K562 (cell line): ENCODE measurements at regions of chr19 and their contacts with region 1.

Region 1: DNA sequence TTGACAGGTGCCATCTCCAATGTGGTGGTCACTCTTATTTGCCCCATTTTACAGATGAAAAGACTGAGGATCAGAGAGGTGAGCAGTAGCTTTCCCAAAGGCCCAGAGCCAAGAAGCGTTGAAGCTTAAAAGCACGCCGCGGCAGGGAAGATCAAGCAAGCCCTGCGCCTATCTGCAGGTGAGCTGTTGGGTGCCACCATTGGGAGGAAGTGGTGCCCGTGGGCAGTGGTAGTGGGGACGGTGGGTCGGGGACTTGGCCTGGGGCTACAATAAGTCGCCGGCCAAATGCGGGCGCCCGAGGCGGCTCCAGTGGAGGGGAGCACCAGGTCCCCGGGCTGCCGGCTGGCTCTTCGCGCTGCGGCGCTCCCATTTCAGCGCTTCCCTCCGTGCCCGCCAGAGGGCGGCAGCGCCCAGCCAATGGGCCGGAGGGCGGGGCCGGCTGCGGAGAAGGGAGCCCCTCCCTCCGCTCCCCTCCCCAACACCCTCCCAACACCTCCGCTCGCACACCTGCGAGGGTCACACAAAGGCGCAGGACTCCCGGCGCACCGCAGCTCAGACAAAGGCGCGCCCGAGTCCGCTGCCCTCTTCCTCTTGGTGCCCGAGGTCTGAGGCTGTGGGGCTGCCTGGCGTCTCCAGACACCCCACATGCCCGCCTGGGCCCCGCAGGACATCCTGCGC is 744 bp upstream of the POU2F2 start:
- DNase-seq: peak; percentile 77 to 97 (median 93)
- ATAC-seq: peak; percentile 95
- H3K4me3 ChIP-seq: no peak overlapping the region
- H3K27ac ChIP-seq: no peak overlapping the region
- H3K4me1 ChIP-seq: peaks cover 0 to 25% of the 10 kb centered on the region in 2 experiments; a peak in 2 of 5 replicates
- H3K27me3 ChIP-seq: peaks cover 35 to 77% of the 10 kb centered on the region in 2 experiments; a peak in 4 of 5 replicates
- CTCF ChIP-seq: peak; percentile 86 to 96 (median 96)
- EP300 ChIP-seq: no peak
- POLR2A ChIP-seq: no peak
- RAD21 ChIP-seq: peak; percentile 92 to 97

Region 2: DNA sequence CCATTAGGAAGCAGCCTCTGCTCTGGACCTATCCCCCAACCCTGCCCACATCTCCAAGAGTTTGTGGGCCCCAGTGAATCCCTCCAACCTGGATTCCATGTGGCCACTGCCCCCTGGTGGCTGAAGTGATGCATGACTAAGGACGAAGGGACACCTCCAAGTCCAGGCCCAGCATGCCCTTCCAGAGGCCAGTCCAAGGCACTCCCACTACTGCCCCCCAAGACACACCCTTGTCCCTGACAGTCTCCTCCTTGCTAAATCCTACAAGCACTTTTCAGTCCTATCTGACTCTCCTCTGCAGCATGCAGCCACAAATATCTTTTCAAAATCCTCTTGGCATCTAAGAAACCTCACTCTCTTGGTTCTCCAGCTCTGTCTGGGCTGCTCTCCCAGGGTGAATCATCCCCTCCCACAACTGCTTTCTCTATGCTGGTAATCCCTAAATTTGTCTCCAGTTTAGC is 51.4 kb after region 1 on chr19:
- CTCF ChIA-PET with region 1: interaction called, 4 read pairs
- POLR2A ChIA-PET with region 1: interaction called, 3 read pairs
- in situ Hi-C with region 1: no loop called
- intact Hi-C with region 1: loop called (anchors 2 kb)
- DNase-seq: peak; percentile 81 to 86 (median 86)
- ATAC-seq: peak; percentile 98
- H3K4me3 ChIP-seq: no peak overlapping the region
- H3K27ac ChIP-seq: no peak overlapping the region
- H3K4me1 ChIP-seq: peaks cover 0 to 6% of the 10 kb centered on the region in 2 experiments; a peak in 2 of 5 replicates
- H3K27me3 ChIP-seq: peaks cover 14 to 19% of the 10 kb centered on the region in 2 experiments
- CTCF ChIP-seq: peak; percentile 83 to 95 (median 87)
- EP300 ChIP-seq: no peak
- POLR2A ChIP-seq: no peak
- RAD21 ChIP-seq: peak; percentile 58 to 80

Region 3: DNA sequence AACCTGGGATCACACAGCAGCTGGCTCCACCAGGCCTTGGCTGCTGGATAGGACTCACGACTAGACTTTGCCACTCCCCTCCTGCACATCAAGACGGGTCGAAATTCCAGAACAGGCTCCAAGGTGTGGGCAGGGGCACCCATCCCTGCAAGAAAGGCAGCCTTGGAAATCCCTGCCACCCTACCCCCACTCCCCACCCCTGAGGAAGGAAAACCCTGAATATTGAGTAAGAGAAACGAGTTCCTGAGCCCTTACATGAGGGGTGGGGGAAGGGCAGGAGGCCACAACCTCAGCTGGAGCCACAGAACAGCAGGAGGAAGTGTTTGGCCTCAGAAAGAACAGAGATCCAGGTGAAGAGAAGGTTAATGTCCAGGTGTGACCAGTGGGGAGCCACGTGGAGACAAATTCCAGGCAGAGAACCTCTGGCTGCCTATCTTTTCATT is 64.4 kb after region 1 on chr19:
- CTCF ChIA-PET with region 1: no interaction called
- POLR2A ChIA-PET with region 1: no interaction called
- in situ Hi-C with region 1: no loop called
- intact Hi-C with region 1: no loop called
- DNase-seq: no peak
- ATAC-seq: no peak
- H3K4me3 ChIP-seq: no peak overlapping the region
- H3K27ac ChIP-seq: no peak overlapping the region
- H3K4me1 ChIP-seq: peaks cover 37 to 53% of the 10 kb centered on the region in 2 experiments
- H3K27me3 ChIP-seq: no peaks in the 10 kb centered on the region; a peak in 1 of 5 replicates
- CTCF ChIP-seq: no peak
- EP300 ChIP-seq: no peak
- POLR2A ChIP-seq: no peak
- RAD21 ChIP-seq: no peak

Region 4: GRCh38 chr19:42295831-42296525 is 163.0 kb after region 1 on chr19:
- CTCF ChIA-PET with region 1: interaction called, 13 read pairs
- POLR2A ChIA-PET with region 1: no interaction called
- in situ Hi-C with region 1: no loop called
- intact Hi-C with region 1: loop called (anchors 1 kb)
- DNase-seq: peak; percentile 74 to 86 (median 78)
- ATAC-seq: peak; percentile 95
- H3K4me3 ChIP-seq: no peak overlapping the region
- H3K27ac ChIP-seq: no peak overlapping the region
- H3K4me1 ChIP-seq: peaks cover under 1 to 59% of the 10 kb centered on the region in 2 experiments; a peak in 4 of 5 replicates
- H3K27me3 ChIP-seq: no peaks in the 10 kb centered on the region
- CTCF ChIP-seq: peak; percentile 94 to 97 (median 97)
- EP300 ChIP-seq: no peak
- POLR2A ChIP-seq: peak; percentile 67
- RAD21 ChIP-seq: peak; percentile 38 to 80; a peak in 3 of 4 replicates

Region 5: DNA sequence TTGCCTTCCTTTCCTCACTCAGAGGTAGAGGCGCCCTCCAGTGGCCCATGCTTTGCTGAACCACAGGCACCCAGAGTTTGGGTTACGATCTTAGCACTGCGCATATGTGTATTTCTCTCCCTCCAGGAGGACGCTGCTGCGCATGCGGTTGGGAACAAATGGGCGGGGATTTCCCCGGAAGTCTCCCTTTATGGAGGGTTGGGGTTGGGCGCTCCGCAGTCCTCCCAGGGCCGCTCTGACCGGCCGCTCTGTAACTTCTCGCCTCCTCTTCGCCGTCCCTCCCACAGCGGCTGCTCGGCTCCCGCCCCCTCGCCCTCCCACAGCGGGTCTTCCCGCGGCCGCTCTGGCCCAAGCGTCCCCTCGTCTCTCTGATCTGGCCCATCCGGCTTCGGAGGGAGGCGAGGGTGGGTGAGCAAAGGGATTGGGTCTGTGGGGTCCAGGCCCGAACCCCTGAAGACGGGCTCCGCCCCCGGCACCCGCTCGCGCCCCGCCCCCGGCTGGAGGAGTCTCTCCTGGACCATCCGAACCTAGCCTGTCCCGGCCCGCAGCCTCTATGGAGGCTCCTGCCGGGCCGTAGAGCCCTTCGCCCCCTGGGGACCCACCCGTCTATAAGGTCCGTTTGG is 192.4 kb after region 1 on chr19 and contains the start of gene MEGF8:
- CTCF ChIA-PET with region 1: interaction called, 4 read pairs
- POLR2A ChIA-PET with region 1: no interaction called
- in situ Hi-C with region 1: loop called (anchors 10 kb)
- intact Hi-C with region 1: loop called (anchors 10 kb)
- DNase-seq: peak; percentile 97 to 99 (median 98)
- ATAC-seq: peak; percentile 98
- H3K4me3 ChIP-seq: peak within 1 kb of the TSS; percentile 99
- H3K27ac ChIP-seq: peak within 1 kb of the TSS; percentile 72
- H3K4me1 ChIP-seq: peaks cover 8 to 27% of the 10 kb centered on the region in 2 experiments; a peak in 4 of 5 replicates
- H3K27me3 ChIP-seq: no peaks in the 10 kb centered on the region
- CTCF ChIP-seq: peak; percentile 91 to 96 (median 94)
- EP300 ChIP-seq: no peak
- POLR2A ChIP-seq: peak; percentile 79
- RAD21 ChIP-seq: peak; percentile 73 to 82
- polyA plus RNA-seq, gene MEGF8: 0.28 to 0.34 TPM

Region 6: GRCh38 chr19:42401365-42402303 is 268.6 kb after region 1 on chr19:
- CTCF ChIA-PET with region 1: interaction called, 11 read pairs
- POLR2A ChIA-PET with region 1: no interaction called
- in situ Hi-C with region 1: no loop called
- intact Hi-C with region 1: no loop called
- DNase-seq: peak; percentile 76 to 85 (median 81)
- ATAC-seq: peak; percentile 59
- H3K4me3 ChIP-seq: no peak overlapping the region; the same call in 1 of the 2 replicates
- H3K27ac ChIP-seq: no peak overlapping the region
- H3K4me1 ChIP-seq: peaks cover 5 to 30% of the 10 kb centered on the region in 2 experiments; a peak in 3 of 5 replicates
- H3K27me3 ChIP-seq: peaks cover 0 to 9% of the 10 kb centered on the region in 2 experiments; a peak in 3 of 5 replicates
- CTCF ChIP-seq: peak; percentile 85 to 88 (median 85)
- EP300 ChIP-seq: no peak
- POLR2A ChIP-seq: no peak
- RAD21 ChIP-seq: peak in 1 of 2 experiments; percentile 61; a peak in 2 of 4 replicates

Region 7: DNA sequence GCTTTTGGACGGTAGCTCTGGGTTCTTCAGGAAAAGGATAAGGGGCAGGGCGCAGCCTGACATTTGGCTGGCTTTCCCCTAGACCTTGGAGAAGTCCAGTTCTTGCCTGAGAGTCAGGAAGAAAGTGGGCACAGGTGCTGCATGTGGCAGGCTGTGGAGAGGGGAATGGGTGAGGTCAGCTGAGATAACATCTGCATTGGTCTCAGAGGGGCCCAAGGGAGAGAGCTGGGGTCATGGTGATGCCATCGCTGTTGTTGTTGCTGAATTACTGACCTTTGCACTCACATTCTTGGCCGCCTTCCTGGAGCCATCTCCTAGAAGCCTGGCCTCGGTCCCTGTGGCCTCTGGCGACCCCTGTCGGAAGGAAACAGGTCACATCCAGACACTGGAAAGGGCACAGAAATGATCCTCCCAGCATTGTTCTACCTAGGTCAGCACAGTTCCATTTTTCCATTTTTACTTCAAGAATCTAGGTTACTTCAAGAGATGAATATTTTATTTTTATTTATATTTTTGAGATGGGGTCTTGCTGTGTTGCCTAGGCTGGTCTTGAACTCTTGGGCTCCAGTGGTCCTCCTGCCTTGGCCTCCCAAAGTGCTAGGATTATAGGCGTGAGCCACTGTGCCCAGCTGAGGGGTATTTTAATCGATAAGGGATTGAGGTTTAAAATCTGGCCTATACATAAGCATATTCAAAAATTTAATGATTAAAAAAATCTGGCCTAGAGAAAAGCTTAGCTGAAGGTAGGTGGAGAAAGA is 300.7 kb after region 1 on chr19:
- CTCF ChIA-PET with region 1: interaction called, 7 read pairs
- POLR2A ChIA-PET with region 1: no interaction called
- in situ Hi-C with region 1: no loop called
- intact Hi-C with region 1: loop called (anchors 1 kb)
- DNase-seq: peak; percentile 61 to 88 (median 71)
- ATAC-seq: peak; percentile 98
- H3K4me3 ChIP-seq: no peak overlapping the region
- H3K27ac ChIP-seq: no peak overlapping the region
- H3K4me1 ChIP-seq: peaks cover 0 to 9% of the 10 kb centered on the region in 2 experiments; a peak in 2 of 5 replicates
- H3K27me3 ChIP-seq: no peaks in the 10 kb centered on the region
- CTCF ChIP-seq: peak; percentile 94 to 98 (median 95)
- EP300 ChIP-seq: no peak
- POLR2A ChIP-seq: no peak
- RAD21 ChIP-seq: peak; percentile 80 to 94